Tibial artery (tissue), 4 donors: ENCODE measurements at regions of chr1 and their contacts with region 1.

Region 1: DNA sequence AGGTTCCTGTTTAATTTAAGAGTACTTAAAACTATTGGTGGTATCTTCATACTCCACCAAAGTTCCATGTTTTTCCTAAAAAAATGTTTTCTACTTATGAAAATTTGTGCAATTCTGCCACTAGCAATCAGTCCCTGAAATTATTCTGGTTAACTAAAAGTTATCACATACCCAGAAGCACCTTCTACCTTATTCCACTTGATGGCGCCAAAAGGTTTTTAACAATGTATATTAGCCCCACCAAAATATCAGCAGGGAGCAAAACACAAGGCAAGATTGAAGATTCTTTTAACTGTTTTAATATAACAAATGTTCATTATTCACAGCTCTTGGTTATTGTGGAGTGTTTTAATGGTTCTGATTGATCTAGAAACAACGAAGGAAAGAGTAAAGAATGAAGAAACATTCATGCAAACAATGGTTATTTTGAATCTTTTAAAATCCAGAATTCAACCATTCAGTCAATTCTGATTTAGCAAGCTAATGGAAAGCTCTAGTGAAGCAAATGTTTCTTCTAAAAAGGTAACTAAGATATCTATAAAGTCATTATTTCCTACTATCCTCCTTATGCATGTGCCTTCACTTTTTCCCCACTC is 67.2 kb downstream of the TTLL7 start:
- DNase-seq: no peak
- H3K4me3 ChIP-seq: no peak overlapping the region
- H3K27ac ChIP-seq: peak overlapping the region in 1 of 2 donors; percentile 16
- H3K4me1 ChIP-seq: peaks cover 0 to 49% (median 0%) of the 10 kb centered on the region in 4 donors
- H3K27me3 ChIP-seq: no peaks in the 10 kb centered on the region
- CTCF ChIP-seq: peak; percentile 70 to 80

Region 2: GRCh38 chr1:83794384-83794783 is 137.4 kb before region 1 on chr1:
- intact Hi-C with region 1: no loop called
- DNase-seq: no peak
- H3K4me3 ChIP-seq: no peak overlapping the region
- H3K27ac ChIP-seq: no peak overlapping the region
- H3K4me1 ChIP-seq: no peaks in the 10 kb centered on the region
- H3K27me3 ChIP-seq: no peaks in the 10 kb centered on the region
- CTCF ChIP-seq: no peak

Region 3: GRCh38 chr1:83998498-83999315 is 67.0 kb after region 1 on chr1 and contains the start of gene TTLL7:
- intact Hi-C with region 1: loop called (anchors 10 kb)
- DNase-seq: peak; percentile 62 to 91
- H3K4me3 ChIP-seq: peak within 1 kb of the TSS; percentile 85 to 91
- H3K27ac ChIP-seq: peak within 1 kb of the TSS; percentile 96 to 99
- H3K4me1 ChIP-seq: peaks cover 0 to 67% (median 15%) of the 10 kb centered on the region in 4 donors
- H3K27me3 ChIP-seq: no peaks in the 10 kb centered on the region
- CTCF ChIP-seq: no peak

Region 4: GRCh38 chr1:84122780-84123382 is 191.1 kb after region 1 on chr1:
- intact Hi-C with region 1: loop called (anchors 5 kb)
- DNase-seq: peak in 1 of 2 donors; percentile 55
- H3K4me3 ChIP-seq: no peak overlapping the region
- H3K27ac ChIP-seq: no peak overlapping the region
- H3K4me1 ChIP-seq: peaks cover 0 to 8% (median 0%) of the 10 kb centered on the region in 4 donors
- H3K27me3 ChIP-seq: no peaks in the 10 kb centered on the region
- CTCF ChIP-seq: peak; percentile 62 to 68

Region 5: GRCh38 chr1:84433258-84434080 is 501.7 kb after region 1 on chr1:
- intact Hi-C with region 1: loop called (anchors 10 kb)
- DNase-seq: peak; percentile 37 to 71
- H3K4me3 ChIP-seq: peak overlapping the region; percentile 14 to 19
- H3K27ac ChIP-seq: no peak overlapping the region
- H3K4me1 ChIP-seq: peaks cover 0 to 4% (median 0%) of the 10 kb centered on the region in 4 donors
- H3K27me3 ChIP-seq: no peaks in the 10 kb centered on the region
- CTCF ChIP-seq: peak; percentile 67 to 85